HepG2 (cell line): ENCODE measurements at regions of chr7 and their contacts with region 1.

Region 1: DNA sequence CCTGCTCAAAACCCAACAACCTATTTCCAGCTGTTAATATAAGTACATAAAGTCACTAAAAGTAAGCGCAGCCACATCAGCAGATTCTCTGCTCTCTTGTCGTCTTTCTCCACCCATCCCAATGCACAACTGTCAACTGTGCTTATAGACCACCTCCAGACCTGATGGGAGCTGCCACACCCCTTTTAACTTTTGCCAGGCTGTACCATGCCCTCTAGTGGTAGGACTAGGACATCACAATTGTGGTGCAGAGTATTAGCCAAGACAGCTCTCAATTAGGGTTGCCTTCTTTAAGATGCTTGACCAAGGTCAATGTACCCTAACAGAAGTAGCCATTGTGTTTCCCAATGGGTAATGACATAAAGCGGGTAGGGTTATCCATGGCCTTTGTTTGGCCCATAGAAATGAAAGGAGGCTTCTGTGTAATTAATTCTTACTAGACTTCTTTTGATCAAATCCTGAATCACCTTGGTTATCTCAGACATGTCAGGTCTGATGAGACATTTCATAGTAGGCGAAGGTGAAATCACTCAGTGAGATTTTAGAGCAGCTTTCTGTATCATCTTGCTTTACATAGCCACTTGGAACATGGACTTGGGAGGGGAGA is 68.1 kb downstream of the SCRN1 start:
- DNase-seq: peak; percentile 52
- ATAC-seq: peak; percentile 90
- H3K4me3 ChIP-seq: no peak overlapping the region
- H3K27ac ChIP-seq: no peak overlapping the region
- H3K4me1 ChIP-seq: no peaks in the 10 kb centered on the region
- H3K27me3 ChIP-seq: no peaks in the 10 kb centered on the region
- CTCF ChIP-seq: peak; percentile 88
- EP300 ChIP-seq: no peak
- POLR2A ChIP-seq: no peak
- RAD21 ChIP-seq: 0 out of 2 replicates have a peak, but pooled peaks have one; percentile 11

Region 2: GRCh38 chr7:29386196-29386765 is 535.2 kb before region 1 on chr7:
- CTCF ChIA-PET with region 1: no interaction called
- POLR2A ChIA-PET with region 1: no interaction called
- in situ Hi-C with region 1: no loop called
- intact Hi-C with region 1: no loop called
- DNase-seq: no peak
- ATAC-seq: no peak
- H3K4me3 ChIP-seq: no peak overlapping the region
- H3K27ac ChIP-seq: no peak overlapping the region
- H3K4me1 ChIP-seq: peaks cover 26% of the 10 kb centered on the region
- H3K27me3 ChIP-seq: no peaks in the 10 kb centered on the region
- CTCF ChIP-seq: no peak
- EP300 ChIP-seq: no peak
- POLR2A ChIP-seq: no peak
- RAD21 ChIP-seq: no peak

Region 3: GRCh38 chr7:29748286-29749108 is 173.0 kb before region 1 on chr7:
- CTCF ChIA-PET with region 1: no interaction called
- POLR2A ChIA-PET with region 1: no interaction called
- in situ Hi-C with region 1: no loop called
- intact Hi-C with region 1: loop called (anchors 1 kb)
- DNase-seq: peak; percentile 38
- ATAC-seq: peak; percentile 78
- H3K4me3 ChIP-seq: no peak overlapping the region
- H3K27ac ChIP-seq: no peak overlapping the region
- H3K4me1 ChIP-seq: peaks cover 13% of the 10 kb centered on the region
- H3K27me3 ChIP-seq: peaks cover 0 to 12% of the 10 kb centered on the region in 2 experiments; a peak in 1 of 5 replicates
- CTCF ChIP-seq: peak; percentile 44
- EP300 ChIP-seq: no peak
- POLR2A ChIP-seq: no peak
- RAD21 ChIP-seq: no peak

Region 4: DNA sequence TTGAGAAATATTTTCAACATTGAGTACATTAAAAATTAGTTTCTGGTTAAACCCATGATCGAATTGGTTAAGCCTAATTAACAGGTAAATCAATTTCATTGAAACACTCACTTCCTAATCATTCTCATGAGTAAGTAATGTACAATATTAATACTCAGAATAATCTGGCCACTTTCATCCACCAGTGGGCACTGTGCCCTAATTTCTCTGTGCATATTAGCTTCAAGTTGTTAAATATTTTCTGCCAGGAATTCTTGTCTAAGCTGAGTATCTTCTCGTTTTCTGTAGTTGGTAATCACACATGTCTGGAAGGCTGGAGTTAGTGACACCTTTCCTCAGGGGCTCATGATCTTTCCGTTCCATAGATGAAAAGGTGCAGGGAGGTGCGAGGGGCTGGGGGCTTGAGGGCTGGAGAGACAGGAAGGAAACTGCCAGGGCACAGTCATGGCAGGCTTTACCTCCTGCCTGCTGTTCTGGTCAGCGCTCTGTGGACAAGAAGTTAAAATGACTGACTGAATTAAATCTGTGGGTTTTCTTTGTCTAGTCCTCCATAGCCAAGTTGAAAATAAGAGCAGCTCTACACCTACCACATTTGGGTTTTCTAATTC is 43.3 kb before region 1 on chr7:
- CTCF ChIA-PET with region 1: interaction called, 3 read pairs
- POLR2A ChIA-PET with region 1: no interaction called
- in situ Hi-C with region 1: no loop called
- intact Hi-C with region 1: loop called (anchors 5 kb)
- DNase-seq: peak; percentile 20
- ATAC-seq: peak; percentile 57; the same call in 2 of the 3 replicates
- H3K4me3 ChIP-seq: no peak overlapping the region
- H3K27ac ChIP-seq: no peak overlapping the region
- H3K4me1 ChIP-seq: peaks cover 8% of the 10 kb centered on the region; the same call in 1 of the 2 replicates
- H3K27me3 ChIP-seq: peaks cover 0 to 9% of the 10 kb centered on the region in 2 experiments; a peak in 3 of 5 replicates
- CTCF ChIP-seq: peak; percentile 39
- EP300 ChIP-seq: no peak
- POLR2A ChIP-seq: no peak
- RAD21 ChIP-seq: no peak

Region 5: DNA sequence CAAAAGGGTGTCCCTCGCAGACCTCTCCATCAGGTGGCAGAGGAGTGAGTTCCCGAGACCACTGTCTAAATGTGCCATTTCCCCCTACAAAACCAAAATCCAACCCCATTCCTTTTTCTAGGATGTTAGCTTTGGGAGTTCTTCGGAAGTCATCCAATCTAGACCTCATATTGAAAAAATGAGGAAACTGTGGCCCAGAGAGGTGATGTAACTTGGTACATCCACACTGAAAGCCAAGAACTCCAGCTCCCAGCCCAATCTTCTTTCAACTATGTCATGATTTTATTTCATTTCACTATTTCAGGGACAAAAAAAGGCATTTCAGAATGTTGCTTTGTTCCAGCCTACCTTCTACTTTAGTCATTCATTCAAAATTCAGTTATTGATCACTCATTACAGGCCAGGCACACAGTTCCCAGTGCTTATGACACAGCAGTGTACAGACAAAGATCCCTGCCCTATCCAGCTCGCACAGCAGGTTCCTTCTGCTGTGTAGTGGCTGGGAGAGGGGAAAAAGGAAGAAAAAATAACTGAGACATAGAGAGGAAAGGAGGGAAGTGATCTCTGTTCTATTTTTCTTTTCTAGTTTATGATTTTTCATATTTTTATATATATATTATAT is 32.3 kb after region 1 on chr7:
- CTCF ChIA-PET with region 1: no interaction called
- POLR2A ChIA-PET with region 1: no interaction called
- in situ Hi-C with region 1: no loop called
- intact Hi-C with region 1: loop called (anchors 1 kb)
- DNase-seq: no peak
- ATAC-seq: no peak
- H3K4me3 ChIP-seq: no peak overlapping the region
- H3K27ac ChIP-seq: no peak overlapping the region
- H3K4me1 ChIP-seq: no peaks in the 10 kb centered on the region
- H3K27me3 ChIP-seq: no peaks in the 10 kb centered on the region
- CTCF ChIP-seq: no peak
- EP300 ChIP-seq: no peak
- POLR2A ChIP-seq: no peak
- RAD21 ChIP-seq: no peak

Region 6: GRCh38 chr7:30038182-30038980 is 116.9 kb after region 1 on chr7:
- CTCF ChIA-PET with region 1: no interaction called
- POLR2A ChIA-PET with region 1: no interaction called
- in situ Hi-C with region 1: no loop called
- intact Hi-C with region 1: no loop called
- DNase-seq: no peak
- ATAC-seq: no peak
- H3K4me3 ChIP-seq: no peak overlapping the region
- H3K27ac ChIP-seq: no peak overlapping the region
- H3K4me1 ChIP-seq: peaks cover 30% of the 10 kb centered on the region
- H3K27me3 ChIP-seq: no peaks in the 10 kb centered on the region
- CTCF ChIP-seq: no peak
- EP300 ChIP-seq: no peak
- POLR2A ChIP-seq: no peak
- RAD21 ChIP-seq: no peak